GM12878 (cell line): ENCODE measurements at regions of chr20 and their contacts with region 1.

Region 1: DNA sequence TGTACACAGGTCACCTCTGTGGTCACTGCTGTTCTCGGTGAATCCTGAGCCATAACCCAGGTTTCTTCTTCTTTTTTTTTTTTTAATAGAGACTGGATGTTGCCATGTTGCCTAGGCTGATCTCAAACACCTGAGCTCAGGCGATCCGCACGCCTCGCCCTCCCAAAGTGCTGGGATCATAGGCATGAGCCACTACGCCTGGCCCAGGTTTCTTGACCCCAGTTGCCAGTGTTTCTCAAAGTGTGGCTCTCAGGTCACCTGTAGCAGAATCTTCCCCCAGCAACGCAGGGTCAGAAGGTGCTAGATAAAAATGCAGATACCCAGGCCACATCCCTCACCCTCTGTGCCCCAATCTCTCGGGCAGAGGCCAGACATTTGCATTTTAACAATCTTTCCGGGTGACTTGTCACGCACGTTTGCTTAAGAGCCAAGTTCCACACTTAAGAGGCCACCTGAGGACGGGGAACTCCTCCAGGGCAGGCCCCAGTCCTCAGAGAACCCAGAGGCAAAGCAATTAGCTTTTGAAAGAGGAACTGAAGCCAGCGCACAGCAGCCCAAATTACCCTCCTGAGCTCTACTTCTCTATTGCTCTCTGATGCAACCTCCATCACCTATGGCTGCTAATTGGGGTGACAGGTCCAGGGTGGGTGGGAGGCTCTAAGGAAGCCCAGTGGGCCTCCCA is 81.8 kb downstream of the NFATC2 start:
- DNase-seq: peak; percentile 64
- ATAC-seq: peak; percentile 99
- H3K4me3 ChIP-seq: no peak overlapping the region
- H3K27ac ChIP-seq: peak overlapping the region; percentile 74
- H3K4me1 ChIP-seq: peaks cover 16% of the 10 kb centered on the region
- H3K27me3 ChIP-seq: no peaks in the 10 kb centered on the region
- CTCF ChIP-seq: no peak
- EP300 ChIP-seq: peak; percentile 89 to 90; a peak in 3 of 4 replicates
- POLR2A ChIP-seq: no peak
- RAD21 ChIP-seq: peak; percentile 7; the same call in 1 of the 2 replicates

Region 2: DNA sequence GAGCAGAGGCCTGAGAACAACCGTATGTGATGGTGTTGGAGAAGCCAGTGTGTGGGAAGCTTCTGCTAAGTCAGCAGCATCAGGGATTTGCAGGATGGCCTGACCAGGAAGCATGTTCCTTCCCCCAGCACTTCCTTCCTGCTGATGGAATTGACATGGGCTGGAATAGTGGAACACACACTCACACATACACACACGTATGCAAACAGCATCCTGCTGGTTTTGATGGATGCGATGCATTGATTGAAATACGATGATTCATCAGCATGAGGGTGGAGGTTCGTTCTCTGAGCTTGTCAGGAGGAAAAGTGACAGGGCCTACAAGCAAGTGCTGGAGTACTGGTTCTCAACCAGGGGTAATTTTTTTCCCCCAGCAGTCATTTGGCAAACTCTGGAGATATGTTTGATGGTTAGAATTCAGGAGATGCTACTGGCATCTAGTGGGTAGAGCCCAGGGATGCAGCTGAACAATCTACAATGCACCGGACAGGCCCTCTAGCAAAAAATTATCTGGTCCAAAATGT is 147.3 kb before region 1 on chr20:
- CTCF ChIA-PET with region 1: no interaction called
- POLR2A ChIA-PET with region 1: no interaction called
- RAD21 ChIA-PET with region 1: no interaction called
- SMC1A ChIA-PET with region 1: no interaction called
- in situ Hi-C with region 1: no loop called
- intact Hi-C with region 1: no loop called
- DNase-seq: no peak
- ATAC-seq: no peak
- H3K4me3 ChIP-seq: no peak overlapping the region
- H3K27ac ChIP-seq: no peak overlapping the region
- H3K4me1 ChIP-seq: no peaks in the 10 kb centered on the region
- H3K27me3 ChIP-seq: peaks cover 2 to 7% of the 10 kb centered on the region in 2 experiments
- CTCF ChIP-seq: no peak
- EP300 ChIP-seq: no peak
- POLR2A ChIP-seq: no peak
- RAD21 ChIP-seq: no peak

Region 3: GRCh38 chr20:51404298-51405060 is 56.2 kb before region 1 on chr20:
- CTCF ChIA-PET with region 1: no interaction called
- POLR2A ChIA-PET with region 1: no interaction called
- RAD21 ChIA-PET with region 1: interaction called, 9 read pairs
- SMC1A ChIA-PET with region 1: interaction called, 8 read pairs
- in situ Hi-C with region 1: no loop called
- intact Hi-C with region 1: loop called (anchors 2 kb)
- DNase-seq: peak; percentile 80
- ATAC-seq: peak; percentile 88
- H3K4me3 ChIP-seq: no peak overlapping the region
- H3K27ac ChIP-seq: peak overlapping the region; percentile 73
- H3K4me1 ChIP-seq: peaks cover 61% of the 10 kb centered on the region
- H3K27me3 ChIP-seq: no peaks in the 10 kb centered on the region
- CTCF ChIP-seq: no peak
- EP300 ChIP-seq: peak; percentile 16 to 77; a peak in 2 of 4 replicates
- POLR2A ChIP-seq: peak; percentile 70
- RAD21 ChIP-seq: no peak

Region 4: GRCh38 chr20:51500311-51500710 is 39.6 kb after region 1 on chr20:
- CTCF ChIA-PET with region 1: no interaction called
- POLR2A ChIA-PET with region 1: no interaction called
- RAD21 ChIA-PET with region 1: interaction called, 3 read pairs
- SMC1A ChIA-PET with region 1: interaction called, 7 read pairs
- in situ Hi-C with region 1: no loop called
- intact Hi-C with region 1: loop called (anchors 2 kb)
- DNase-seq: peak; percentile 37
- ATAC-seq: peak; percentile 89
- H3K4me3 ChIP-seq: no peak overlapping the region
- H3K27ac ChIP-seq: peak overlapping the region; percentile 34; the same call in 1 of the 2 replicates
- H3K4me1 ChIP-seq: peaks cover 51% of the 10 kb centered on the region
- H3K27me3 ChIP-seq: no peaks in the 10 kb centered on the region
- CTCF ChIP-seq: no peak
- EP300 ChIP-seq: no peak
- POLR2A ChIP-seq: no peak
- RAD21 ChIP-seq: no peak